H1 (cell line): ENCODE measurements at regions of chr17 and their contacts with region 1.

Region 1: GRCh38 chr17:74736513-74737298 is at the start of gene RAB37:
- DNase-seq: peak in 1 of 2 experiments; percentile 86
- H3K4me3 ChIP-seq: peak within 1 kb of the TSS; percentile 55 to 75 (median 66)
- H3K27ac ChIP-seq: no peak within 1 kb of the TSS
- H3K4me1 ChIP-seq: peaks cover 5 to 18% (median 9%) of the 10 kb centered on the region in 4 experiments
- H3K27me3 ChIP-seq: peaks cover 0 to 8% (median 2%) of the 10 kb centered on the region in 4 experiments; a peak in 4 of 7 replicates
- CTCF ChIP-seq: peak; percentile 41 to 64 (median 60)
- EP300 ChIP-seq: peak in 1 of 2 experiments; percentile 16; a peak in 1 of 3 replicates
- POLR2A ChIP-seq: no peak
- RAD21 ChIP-seq: peak; percentile 46 to 65; a peak in 3 of 4 replicates
- total RNA-seq, gene RAB37: 5.2 and 5.5 TPM in 2 replicates

Region 2: GRCh38 chr17:74659898-74660297 is 76.8 kb before region 1 on chr17:
- CTCF ChIA-PET with region 1: interaction called, 81 read pairs
- POLR2A ChIA-PET with region 1: interaction called, 5 read pairs
- DNase-seq: no peak
- H3K4me3 ChIP-seq: no peak overlapping the region
- H3K27ac ChIP-seq: no peak overlapping the region
- H3K4me1 ChIP-seq: 0 out of 7 replicates have a peak, but pooled peaks cover 0 to 2% (median 0%) of the 10 kb centered on the region in 4 experiments
- H3K27me3 ChIP-seq: no peaks in the 10 kb centered on the region
- CTCF ChIP-seq: no peak
- EP300 ChIP-seq: no peak
- POLR2A ChIP-seq: no peak
- RAD21 ChIP-seq: no peak

Region 3: DNA sequence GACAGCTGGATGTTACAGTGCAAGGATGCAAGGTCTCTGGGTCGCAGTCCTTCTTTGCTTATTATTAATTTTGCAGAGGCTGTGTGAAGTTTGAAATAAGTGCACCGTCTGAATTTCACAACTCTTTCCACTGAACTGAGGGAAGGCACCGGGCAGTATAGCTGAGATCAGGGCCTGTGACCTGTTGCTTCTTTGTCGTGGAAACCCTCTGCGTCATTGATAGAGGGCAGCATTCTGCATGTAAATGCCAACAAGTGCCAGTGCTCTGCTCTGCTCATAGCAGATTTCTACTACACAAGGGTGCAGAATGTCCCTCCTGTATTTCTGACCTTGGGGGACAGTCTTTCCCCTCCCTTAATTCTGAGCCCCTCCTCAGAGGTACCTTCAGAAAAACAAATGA is 49.9 kb before region 1 on chr17:
- CTCF ChIA-PET with region 1: interaction called, 12 read pairs
- POLR2A ChIA-PET with region 1: interaction called, 3 read pairs
- DNase-seq: no peak
- H3K4me3 ChIP-seq: no peak overlapping the region
- H3K27ac ChIP-seq: no peak overlapping the region
- H3K4me1 ChIP-seq: no peaks in the 10 kb centered on the region
- H3K27me3 ChIP-seq: peaks cover 0 to under 1% (median 0%) of the 10 kb centered on the region in 4 experiments; a peak in 1 of 7 replicates
- CTCF ChIP-seq: no peak
- EP300 ChIP-seq: no peak
- POLR2A ChIP-seq: no peak
- RAD21 ChIP-seq: no peak

Region 4: GRCh38 chr17:74759243-74759801 is 22.6 kb after region 1 on chr17:
- CTCF ChIA-PET with region 1: interaction called, 45 read pairs
- POLR2A ChIA-PET with region 1: interaction called, 3 read pairs
- DNase-seq: no peak
- H3K4me3 ChIP-seq: peak overlapping the region in 1 of 4 experiments; percentile 36; a peak in 2 of 8 replicates
- H3K27ac ChIP-seq: peak overlapping the region; percentile 70; the same call in 1 of the 2 replicates
- H3K4me1 ChIP-seq: peaks cover 10 to 67% (median 51%) of the 10 kb centered on the region in 4 experiments
- H3K27me3 ChIP-seq: no peaks in the 10 kb centered on the region
- CTCF ChIP-seq: no peak
- EP300 ChIP-seq: no peak
- POLR2A ChIP-seq: no peak
- RAD21 ChIP-seq: no peak

Region 5: GRCh38 chr17:74776044-74776977 is 39.6 kb after region 1 on chr17 and contains the start of gene NAT9:
- CTCF ChIA-PET with region 1: interaction called, 37 read pairs
- POLR2A ChIA-PET with region 1: interaction called, 12 read pairs
- DNase-seq: peak; percentile 92 to 100
- H3K4me3 ChIP-seq: peak within 1 kb of the TSS; percentile 73 to 89 (median 80)
- H3K27ac ChIP-seq: peak within 1 kb of the TSS; percentile 39; the same call in 1 of the 2 replicates
- H3K4me1 ChIP-seq: peaks cover 0 to 6% (median 3%) of the 10 kb centered on the region in 4 experiments; a peak in 3 of 7 replicates
- H3K27me3 ChIP-seq: no peaks in the 10 kb centered on the region
- CTCF ChIP-seq: no peak
- EP300 ChIP-seq: no peak
- POLR2A ChIP-seq: no peak; a peak in 1 of 3 replicates
- RAD21 ChIP-seq: no peak
- total RNA-seq, gene NAT9: 40.6 and 42.7 TPM in 2 replicates

Region 6: DNA sequence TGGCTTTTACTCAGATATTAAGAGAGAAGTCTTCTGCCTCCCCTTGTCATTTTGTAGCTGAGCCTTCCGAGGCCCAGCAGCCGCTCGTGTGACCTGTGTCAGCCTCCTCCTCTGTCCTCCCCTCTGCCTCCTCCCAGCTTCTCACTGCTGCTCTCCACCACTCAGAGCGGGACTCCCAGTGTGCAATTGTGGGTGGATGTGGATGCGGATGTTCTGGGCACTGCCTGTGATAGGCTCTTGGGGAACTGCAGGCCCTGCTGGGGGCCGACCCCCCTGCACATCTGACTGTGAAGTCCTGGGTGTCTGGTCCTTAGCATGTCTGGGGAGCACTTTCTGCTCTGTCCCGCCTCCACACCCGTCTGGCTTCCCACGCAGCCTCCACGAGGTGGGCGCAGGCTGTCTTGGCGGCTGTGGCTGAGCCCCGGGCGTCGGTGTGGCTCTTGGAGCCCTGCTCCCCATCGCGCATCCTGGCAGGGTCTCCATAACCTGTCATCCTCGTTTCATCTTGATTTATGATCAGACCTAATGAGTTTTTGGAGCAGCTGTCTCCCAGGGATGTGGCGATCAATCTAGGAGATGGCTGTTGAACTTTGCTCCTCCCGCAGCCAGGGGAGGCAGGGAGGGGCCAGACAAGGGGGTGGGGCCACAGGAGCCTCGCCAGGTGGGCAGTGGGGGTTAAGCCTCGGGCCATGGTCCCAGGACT is 94.9 kb after region 1 on chr17:
- CTCF ChIA-PET with region 1: no interaction called
- POLR2A ChIA-PET with region 1: no interaction called
- DNase-seq: no peak
- H3K4me3 ChIP-seq: no peak overlapping the region
- H3K27ac ChIP-seq: no peak overlapping the region
- H3K4me1 ChIP-seq: no peaks in the 10 kb centered on the region; a peak in 1 of 7 replicates
- H3K27me3 ChIP-seq: no peaks in the 10 kb centered on the region; a peak in 1 of 7 replicates
- CTCF ChIP-seq: no peak
- EP300 ChIP-seq: no peak
- POLR2A ChIP-seq: no peak
- RAD21 ChIP-seq: no peak

Region 7: DNA sequence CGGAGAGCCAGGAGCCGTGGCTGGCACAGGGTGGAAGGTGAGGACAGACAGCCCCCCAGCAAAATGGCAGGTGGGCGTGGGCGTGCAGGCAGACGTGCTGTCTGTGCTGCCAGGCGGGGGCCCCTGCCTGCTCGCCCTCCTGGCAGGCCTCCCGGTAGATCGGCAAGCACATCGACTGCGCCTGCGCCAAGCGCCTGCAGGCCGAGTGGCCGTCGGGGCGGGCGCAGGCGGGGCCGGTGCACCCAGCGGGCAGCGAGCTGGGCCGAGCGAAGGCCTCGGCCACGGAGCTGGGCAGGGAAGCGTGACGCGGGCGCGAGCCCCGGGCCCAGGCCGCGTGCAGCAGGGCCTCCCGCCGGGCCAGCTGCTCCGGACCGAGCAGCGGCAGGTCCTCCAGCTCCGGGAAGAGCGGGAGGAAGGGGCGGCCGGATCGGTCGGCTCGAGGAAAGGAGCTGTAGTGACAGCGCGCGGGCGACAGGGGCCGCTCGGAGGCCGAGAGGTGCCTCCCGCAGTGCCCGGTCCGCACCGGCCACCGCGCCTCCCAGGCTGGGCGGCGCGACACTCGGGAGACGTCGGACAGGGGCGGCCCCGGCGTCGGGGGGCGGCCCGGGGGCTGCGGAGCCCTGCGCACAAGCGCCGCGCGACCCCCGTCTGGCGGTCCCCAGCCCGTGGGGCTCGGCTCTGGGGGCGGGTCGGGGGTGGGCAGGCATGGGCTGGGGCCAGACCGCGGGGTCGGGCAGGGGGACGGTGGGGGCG is 106.1 kb after region 1 on chr17:
- CTCF ChIA-PET with region 1: interaction called, 10 read pairs
- POLR2A ChIA-PET with region 1: no interaction called
- DNase-seq: peak in 1 of 2 experiments; percentile 88
- H3K4me3 ChIP-seq: peak overlapping the region; percentile 35 to 57 (median 43); a peak in 7 of 8 replicates
- H3K27ac ChIP-seq: no peak overlapping the region
- H3K4me1 ChIP-seq: peaks cover 0 to 29% (median 14%) of the 10 kb centered on the region in 4 experiments; a peak in 6 of 7 replicates
- H3K27me3 ChIP-seq: peaks cover 16 to 54% (median 43%) of the 10 kb centered on the region in 4 experiments
- CTCF ChIP-seq: peak; percentile 64 to 71 (median 70)
- EP300 ChIP-seq: no peak
- POLR2A ChIP-seq: no peak
- RAD21 ChIP-seq: peak; percentile 45 to 65